ENCODE measurements at regions of chr12 and their contacts with region 1.

Region 1: DNA sequence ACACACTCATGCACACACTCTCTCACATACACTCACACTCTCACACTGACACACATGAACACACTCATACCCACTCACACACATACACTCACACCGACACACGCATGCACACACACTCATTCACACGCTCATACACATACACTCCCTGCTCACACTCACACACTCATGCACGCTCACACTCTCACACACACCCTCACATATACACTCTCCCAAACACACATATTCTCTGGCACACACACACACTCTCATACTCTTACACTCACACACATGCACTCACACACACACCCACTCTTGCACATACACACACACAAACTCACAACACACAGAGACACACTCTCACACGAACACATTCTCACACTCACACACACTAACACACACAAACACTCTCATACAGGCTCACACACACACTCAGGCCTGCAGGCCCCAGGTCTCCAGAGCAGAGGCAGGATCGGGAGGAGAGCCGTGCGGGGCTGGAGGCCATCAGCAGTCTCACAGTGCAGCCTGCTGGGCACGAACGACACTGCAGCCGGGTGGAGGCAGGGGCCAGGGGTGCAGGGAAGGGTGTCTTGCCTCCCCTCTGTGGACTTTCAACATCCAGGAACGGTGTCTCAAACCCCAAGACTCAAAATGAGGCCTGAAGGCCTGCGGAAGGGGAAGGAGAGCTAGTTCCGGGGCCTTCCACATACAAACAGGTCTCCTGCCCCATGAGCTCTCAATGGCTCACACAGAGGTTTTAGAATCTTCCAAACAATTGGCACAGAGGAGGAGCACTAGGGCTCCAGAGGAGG is 148.7 kb downstream of the ANO2 start:
- DNase-seq: peak in 1 of 2 experiments; percentile 87
- H3K4me3 ChIP-seq: no peak overlapping the region
- H3K27ac ChIP-seq: no peak overlapping the region
- H3K4me1 ChIP-seq: no peaks in the 10 kb centered on the region
- H3K27me3 ChIP-seq: 0 out of 7 replicates have a peak, but pooled peaks cover 0 to 3% (median 0%) of the 10 kb centered on the region in 4 experiments
- CTCF ChIP-seq: peak; percentile 95 to 100 (median 97)
- EP300 ChIP-seq: no peak
- POLR2A ChIP-seq: no peak
- RAD21 ChIP-seq: peak; percentile 98

Region 2: GRCh38 chr12:5034603-5035002 is 761.8 kb before region 1 on chr12:
- CTCF ChIA-PET with region 1: no interaction called
- POLR2A ChIA-PET with region 1: no interaction called
- DNase-seq: no peak
- H3K4me3 ChIP-seq: no peak overlapping the region
- H3K27ac ChIP-seq: no peak overlapping the region
- H3K4me1 ChIP-seq: peaks cover 0 to 4% (median 1%) of the 10 kb centered on the region in 4 experiments; a peak in 1 of 7 replicates
- H3K27me3 ChIP-seq: no peaks in the 10 kb centered on the region; a peak in 1 of 7 replicates
- CTCF ChIP-seq: no peak
- EP300 ChIP-seq: no peak
- POLR2A ChIP-seq: no peak
- RAD21 ChIP-seq: no peak

Region 3: DNA sequence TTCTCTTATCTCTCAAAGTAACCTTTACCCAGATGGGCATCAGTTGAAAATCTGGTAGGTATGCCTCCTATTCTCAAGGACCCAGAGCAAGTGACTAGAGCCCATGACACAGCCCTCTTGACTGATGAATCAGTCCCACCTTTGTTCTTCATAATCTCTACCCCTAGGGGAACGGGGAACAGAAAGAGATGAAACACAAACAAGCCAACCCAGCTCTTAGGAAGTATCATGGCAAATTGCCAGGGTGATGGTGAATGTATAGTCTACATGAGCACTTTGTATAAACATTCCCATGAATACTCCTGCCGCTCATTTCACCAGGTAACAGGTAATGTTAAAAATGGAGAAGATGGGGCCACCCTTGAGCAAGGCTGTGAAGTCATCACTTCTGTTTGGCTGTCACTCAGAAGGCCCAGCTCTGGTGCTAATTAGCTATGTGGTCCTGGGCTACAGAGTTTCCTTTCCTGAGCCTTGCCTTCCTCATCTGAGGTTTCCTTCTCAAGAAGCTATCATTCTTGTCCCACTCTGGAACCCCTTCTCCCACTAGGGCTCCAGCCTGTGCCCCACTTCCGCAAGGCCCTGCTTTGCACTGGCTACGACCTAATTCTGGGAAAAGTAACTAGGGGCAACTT is 13.0 kb before region 1 on chr12:
- CTCF ChIA-PET with region 1: interaction called, 25 read pairs
- POLR2A ChIA-PET with region 1: no interaction called
- DNase-seq: peak in 1 of 2 experiments; percentile 14
- H3K4me3 ChIP-seq: no peak overlapping the region
- H3K27ac ChIP-seq: no peak overlapping the region
- H3K4me1 ChIP-seq: no peaks in the 10 kb centered on the region
- H3K27me3 ChIP-seq: no peaks in the 10 kb centered on the region
- CTCF ChIP-seq: no peak
- EP300 ChIP-seq: no peak
- POLR2A ChIP-seq: no peak
- RAD21 ChIP-seq: no peak

Region 4: GRCh38 chr12:5808981-5809380 is 12.6 kb after region 1 on chr12:
- CTCF ChIA-PET with region 1: interaction called, 16 read pairs
- POLR2A ChIA-PET with region 1: no interaction called
- DNase-seq: no peak
- H3K4me3 ChIP-seq: no peak overlapping the region
- H3K27ac ChIP-seq: no peak overlapping the region
- H3K4me1 ChIP-seq: no peaks in the 10 kb centered on the region; a peak in 1 of 7 replicates
- H3K27me3 ChIP-seq: no peaks in the 10 kb centered on the region
- CTCF ChIP-seq: no peak
- EP300 ChIP-seq: no peak
- POLR2A ChIP-seq: no peak
- RAD21 ChIP-seq: no peak

Region 5: DNA sequence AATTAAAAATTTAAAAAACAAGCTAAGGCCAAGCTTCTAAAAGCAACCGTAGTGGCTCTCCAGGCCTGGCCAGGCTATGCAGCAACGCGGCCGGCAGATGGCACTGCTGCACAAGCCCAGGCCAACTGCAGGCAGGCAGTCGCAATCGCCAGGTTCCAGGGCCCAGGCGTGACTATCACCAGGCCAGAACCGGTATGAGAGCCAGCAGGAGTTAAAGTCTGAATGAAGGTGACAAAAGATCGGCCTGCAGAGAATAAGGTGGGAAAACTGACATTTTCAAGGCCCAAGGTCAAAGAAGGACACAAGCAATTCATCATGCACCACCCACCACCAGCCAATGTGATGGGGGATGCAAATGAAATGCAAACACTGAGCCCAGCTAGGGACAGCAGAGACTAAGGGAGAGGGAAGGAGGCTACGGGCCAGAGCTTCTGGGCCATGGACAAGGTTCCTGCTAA is 192.3 kb after region 1 on chr12:
- CTCF ChIA-PET with region 1: no interaction called
- POLR2A ChIA-PET with region 1: no interaction called
- DNase-seq: peak; percentile 75 to 86
- H3K4me3 ChIP-seq: no peak overlapping the region
- H3K27ac ChIP-seq: no peak overlapping the region; the same call in 1 of the 2 replicates
- H3K4me1 ChIP-seq: peaks cover 2 to 6% (median 4%) of the 10 kb centered on the region in 4 experiments; a peak in 6 of 7 replicates
- H3K27me3 ChIP-seq: no peaks in the 10 kb centered on the region
- CTCF ChIP-seq: peak; percentile 93 to 99 (median 97)
- EP300 ChIP-seq: peak in 1 of 2 experiments; percentile 57; a peak in 1 of 3 replicates
- POLR2A ChIP-seq: no peak
- RAD21 ChIP-seq: peak; percentile 98 to 99